WTC11 (cell line): ENCODE measurements at regions of chr6 and their contacts with region 1.

Region 1: GRCh38 chr6:138692058-138692977 is 81.3 kb upstream of the CCDC28A start:
- DNase-seq: peak; percentile 61
- ATAC-seq: peak; percentile 31
- H3K4me3 Mint-ChIP-seq: peak overlapping the region; percentile 86
- H3K27ac Mint-ChIP-seq: peak overlapping the region; percentile 35
- H3K4me1 Mint-ChIP-seq: peaks cover 32% of the 10 kb centered on the region
- H3K27me3 Mint-ChIP-seq: peaks cover 5% of the 10 kb centered on the region; the same call in 1 of the 2 replicates
- CTCF ChIP-seq: peak; percentile 79

Region 2: DNA sequence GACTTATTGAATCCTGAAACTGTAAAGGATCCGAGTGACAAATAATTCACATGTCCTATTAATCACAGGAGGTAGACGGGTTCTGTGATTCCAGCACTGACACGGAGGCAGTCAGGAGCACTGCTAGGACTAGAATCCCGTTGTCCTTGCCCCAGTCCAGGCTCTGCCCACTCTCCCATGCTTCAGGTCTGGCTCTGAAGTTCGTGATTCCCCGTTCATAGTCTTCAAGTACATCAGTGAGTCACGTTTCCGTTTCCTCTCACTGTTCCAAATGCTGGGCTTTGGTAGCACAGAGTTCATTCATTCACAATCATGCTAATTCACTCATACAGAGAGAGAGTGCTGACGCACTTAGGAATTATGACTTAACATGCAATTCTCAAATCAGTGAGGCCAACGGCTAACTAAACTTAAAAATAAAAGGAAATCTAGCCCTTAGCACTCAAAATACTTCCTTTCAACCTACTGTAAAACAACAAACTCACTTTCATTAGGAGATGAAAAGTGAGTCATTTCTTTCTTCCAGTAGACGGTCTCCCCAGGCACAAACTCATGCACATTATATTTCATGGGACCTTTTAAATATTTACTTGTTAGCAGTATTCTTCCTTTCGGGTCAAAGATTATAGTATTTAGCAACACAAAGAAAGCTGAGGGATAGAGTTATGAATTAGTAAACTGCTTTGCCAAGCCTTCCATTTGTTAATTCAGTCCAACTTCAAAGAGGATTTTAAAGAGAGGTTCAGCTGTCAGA is 99.0 kb before region 1 on chr6:
- CTCF ChIA-PET with region 1: interaction called, 18 read pairs
- POLR2A ChIA-PET with region 1: no interaction called
- DNase-seq: no peak
- ATAC-seq: peak; percentile 20
- H3K4me3 Mint-ChIP-seq: peak overlapping the region; percentile 60
- H3K27ac Mint-ChIP-seq: peak overlapping the region; percentile 95
- H3K4me1 Mint-ChIP-seq: peaks cover 78% of the 10 kb centered on the region
- H3K27me3 Mint-ChIP-seq: no peaks in the 10 kb centered on the region
- CTCF ChIP-seq: no peak

Region 3: GRCh38 chr6:138765896-138766655 is 73.8 kb after region 1 on chr6:
- CTCF ChIA-PET with region 1: interaction called, 12 read pairs
- POLR2A ChIA-PET with region 1: no interaction called
- DNase-seq: no peak
- ATAC-seq: no peak
- H3K4me3 Mint-ChIP-seq: no peak overlapping the region
- H3K27ac Mint-ChIP-seq: no peak overlapping the region
- H3K4me1 Mint-ChIP-seq: no peaks in the 10 kb centered on the region
- H3K27me3 Mint-ChIP-seq: no peaks in the 10 kb centered on the region
- CTCF ChIP-seq: peak; percentile 47